A673 (cell line): ENCODE measurements at regions of chr6 and their contacts with region 1.

Region 1: GRCh38 chr6:28838634-28839442 is 84.9 kb downstream of the TRIM27 start:
- DNase-seq: peak; percentile 93
- H3K4me3 ChIP-seq: peak overlapping the region; percentile 83
- H3K27ac ChIP-seq: peak overlapping the region; percentile 79
- H3K4me1 ChIP-seq: no peaks in the 10 kb centered on the region
- H3K27me3 ChIP-seq: no peaks in the 10 kb centered on the region
- CTCF ChIP-seq: peak; percentile 84

Region 2: DNA sequence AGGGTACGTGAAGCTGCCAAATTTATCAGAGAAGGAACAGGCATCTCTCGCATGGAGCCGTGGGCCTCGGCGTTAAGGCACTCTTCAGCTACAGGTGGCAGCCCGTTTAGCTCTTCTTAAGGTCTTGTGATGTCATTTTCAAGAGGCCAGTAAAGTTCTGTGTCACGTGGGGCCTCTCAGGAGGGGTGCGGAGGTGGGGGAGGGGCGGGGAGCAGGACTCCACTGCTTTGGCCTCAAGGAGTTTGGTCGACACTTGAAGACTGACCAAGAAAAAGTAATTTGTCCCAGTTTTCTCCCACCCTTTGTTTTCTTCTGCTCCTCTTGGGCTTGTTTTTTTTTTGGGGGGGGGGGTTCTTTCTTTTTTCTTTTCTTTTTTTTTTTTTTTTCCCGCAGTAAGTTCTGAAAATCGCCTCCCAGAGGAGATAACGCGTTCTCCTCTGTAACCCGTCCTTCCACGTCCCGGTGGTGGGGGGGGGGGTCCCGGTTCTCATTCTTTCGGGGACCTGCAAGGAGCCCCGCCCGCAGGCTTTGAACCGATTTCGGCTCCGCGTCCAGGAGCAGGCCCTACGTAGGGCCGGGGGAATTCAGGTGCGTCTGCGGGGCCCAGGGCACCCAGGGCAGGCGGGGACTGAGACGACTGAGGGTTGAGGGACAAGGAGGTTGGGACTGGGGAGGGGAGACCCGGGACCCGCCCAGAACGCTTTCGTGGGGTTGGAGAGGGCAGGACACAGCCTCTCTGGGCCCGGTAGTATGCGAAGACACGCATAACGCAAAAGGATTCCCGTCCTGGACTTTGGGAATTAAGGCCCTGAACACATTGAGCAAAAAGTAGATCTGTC is 349.3 kb before region 1 on chr6:
- CTCF ChIA-PET with region 1: no interaction called
- POLR2A ChIA-PET with region 1: no interaction called
- intact Hi-C with region 1: loop called (anchors 2 kb)
- DNase-seq: peak; percentile 90
- H3K4me3 ChIP-seq: peak overlapping the region; percentile 62
- H3K27ac ChIP-seq: peak overlapping the region; percentile 79
- H3K4me1 ChIP-seq: no peaks in the 10 kb centered on the region
- H3K27me3 ChIP-seq: no peaks in the 10 kb centered on the region
- CTCF ChIP-seq: no peak

Region 3: DNA sequence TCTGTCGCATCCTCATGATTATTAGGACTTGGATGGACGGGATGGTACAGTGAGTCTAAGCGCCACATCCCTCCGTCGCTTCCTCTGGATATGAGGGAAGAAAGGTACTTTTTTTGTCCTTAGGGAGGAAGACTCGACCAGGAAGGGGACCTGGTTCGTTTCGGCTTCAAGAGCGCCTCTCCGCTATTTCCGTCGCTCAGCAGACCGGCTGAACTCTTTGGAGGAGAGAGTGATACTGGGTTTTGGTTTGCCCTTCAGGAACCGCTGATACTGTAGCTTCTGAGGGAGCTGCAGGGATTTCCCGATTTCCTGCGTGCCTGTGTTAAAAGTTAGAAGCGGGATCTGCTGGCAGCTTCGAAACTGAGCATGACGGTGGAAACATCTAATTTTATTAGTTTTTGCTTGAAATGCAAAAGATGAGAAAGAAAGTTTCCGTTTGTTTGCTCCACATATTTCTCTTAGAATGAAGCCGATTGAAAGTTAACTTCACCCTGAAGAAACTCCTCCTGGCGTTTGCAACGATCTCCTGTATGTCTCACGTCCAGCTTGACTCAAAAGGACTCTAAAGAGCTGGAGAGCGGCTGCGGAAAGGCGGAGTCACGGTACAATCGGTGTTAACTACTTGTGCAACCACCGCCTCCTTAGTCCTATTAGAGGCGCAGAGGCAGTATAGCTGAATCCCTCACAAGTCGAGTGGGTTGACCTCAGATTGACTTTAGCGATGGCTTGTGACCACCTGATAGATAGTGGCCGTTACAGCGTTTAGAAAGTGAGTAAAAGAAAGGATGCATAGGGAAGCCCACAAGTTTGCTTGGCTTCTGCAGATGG is 44.4 kb before region 1 on chr6:
- CTCF ChIA-PET with region 1: interaction called, 4 read pairs
- POLR2A ChIA-PET with region 1: interaction called, 11 read pairs
- intact Hi-C with region 1: no loop called
- DNase-seq: peak; percentile 75
- H3K4me3 ChIP-seq: peak overlapping the region; percentile 51
- H3K27ac ChIP-seq: no peak overlapping the region
- H3K4me1 ChIP-seq: peaks cover 6% of the 10 kb centered on the region
- H3K27me3 ChIP-seq: no peaks in the 10 kb centered on the region
- CTCF ChIP-seq: no peak

Region 4: GRCh38 chr6:28863604-28864320 is 24.9 kb after region 1 on chr6:
- CTCF ChIA-PET with region 1: interaction called, 4 read pairs
- POLR2A ChIA-PET with region 1: no interaction called
- intact Hi-C with region 1: loop called (anchors 2 kb)
- DNase-seq: peak; percentile 90
- H3K4me3 ChIP-seq: peak overlapping the region; percentile 69
- H3K27ac ChIP-seq: peak overlapping the region; percentile 73
- H3K4me1 ChIP-seq: peaks cover 15% of the 10 kb centered on the region
- H3K27me3 ChIP-seq: no peaks in the 10 kb centered on the region
- CTCF ChIP-seq: no peak

Region 5: DNA sequence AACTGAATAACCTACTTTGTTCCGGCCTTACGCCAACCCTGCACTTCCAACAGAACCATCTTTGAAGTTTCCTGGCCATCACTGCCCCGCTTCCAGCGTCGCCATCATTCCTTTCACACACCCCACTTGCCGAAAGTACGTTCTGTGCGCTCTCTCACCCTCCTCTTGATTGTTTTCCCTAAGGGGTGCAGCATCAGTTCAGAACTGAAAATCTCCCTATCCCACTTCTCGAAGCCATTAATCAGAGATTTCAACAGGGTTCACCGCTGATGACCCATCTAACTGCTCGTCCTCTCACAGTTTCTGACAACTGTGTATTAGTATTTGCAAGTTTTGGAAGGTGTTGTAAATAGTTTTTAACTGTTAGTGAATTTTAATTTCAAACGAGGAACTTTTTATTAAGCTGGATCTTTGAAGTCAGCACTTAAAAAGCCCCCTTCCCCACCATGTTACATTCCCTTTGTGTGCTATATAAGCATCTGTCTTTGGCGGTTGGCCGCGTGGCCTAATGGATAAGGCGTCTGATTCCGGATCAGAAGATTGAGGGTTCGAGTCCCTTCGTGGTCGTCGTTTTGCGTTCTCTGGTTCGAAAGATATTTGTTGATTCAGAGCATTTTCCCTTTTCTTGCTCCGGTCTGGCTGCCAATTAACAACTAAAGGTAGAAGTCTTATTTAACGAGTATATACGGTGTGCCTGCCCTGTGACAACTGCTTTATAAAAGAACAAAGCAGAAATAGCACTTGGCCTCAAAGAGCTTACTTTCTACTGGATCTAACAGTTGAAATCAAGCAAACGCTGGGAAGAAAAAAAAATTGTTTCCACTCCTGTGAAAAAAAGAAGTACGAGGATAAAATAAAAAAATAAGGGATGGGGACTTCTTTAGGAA is 42.3 kb after region 1 on chr6:
- CTCF ChIA-PET with region 1: no interaction called
- POLR2A ChIA-PET with region 1: no interaction called
- intact Hi-C with region 1: loop called (anchors 5 kb)
- DNase-seq: peak; percentile 88
- H3K4me3 ChIP-seq: peak overlapping the region; percentile 66
- H3K27ac ChIP-seq: peak overlapping the region; percentile 70
- H3K4me1 ChIP-seq: no peaks in the 10 kb centered on the region
- H3K27me3 ChIP-seq: no peaks in the 10 kb centered on the region
- CTCF ChIP-seq: no peak

Region 6: DNA sequence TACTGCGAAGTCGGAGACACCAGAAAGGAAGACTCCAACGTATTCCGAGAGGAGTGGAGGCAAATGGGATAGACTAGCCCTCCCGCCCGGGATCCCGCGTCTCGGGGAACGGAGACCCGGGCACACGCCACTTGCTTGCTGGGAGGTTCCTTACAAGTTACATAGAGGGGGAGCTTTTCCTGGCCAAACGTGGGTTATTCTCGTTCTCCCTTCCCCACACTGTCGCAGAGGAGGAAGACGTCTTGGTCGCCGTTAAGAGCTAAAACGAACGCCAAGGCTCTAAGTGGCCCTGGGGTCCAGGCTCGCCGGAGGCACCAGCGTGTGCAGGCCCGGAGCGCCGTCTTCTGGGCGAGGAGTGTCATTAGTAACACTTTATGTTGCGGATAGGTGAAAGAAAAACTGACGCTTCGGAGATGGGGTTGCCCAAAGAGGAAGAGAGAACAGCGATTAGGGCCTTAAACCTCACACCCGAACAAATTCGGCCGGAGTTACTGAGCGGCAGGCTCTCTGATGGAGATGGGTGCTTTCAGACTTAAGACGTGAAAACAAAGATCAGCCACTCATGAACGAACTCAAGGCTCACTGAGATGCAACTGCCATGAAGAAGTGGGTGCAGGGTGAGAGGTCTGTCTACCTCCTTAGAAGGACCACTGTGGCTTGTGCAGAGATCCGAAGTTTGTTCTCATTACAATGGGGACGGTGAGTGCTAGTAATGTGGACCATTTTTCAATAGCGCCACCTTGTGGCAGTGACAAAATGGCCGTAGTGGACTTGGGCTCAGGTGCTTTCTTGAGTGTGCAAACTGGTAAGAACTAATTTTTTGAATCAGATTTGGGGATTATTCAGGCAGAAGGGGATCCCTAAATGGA is 178.0 kb after region 1 on chr6:
- CTCF ChIA-PET with region 1: interaction called, 9 read pairs
- POLR2A ChIA-PET with region 1: no interaction called
- intact Hi-C with region 1: loop called (anchors 2 kb)
- DNase-seq: peak; percentile 84
- H3K4me3 ChIP-seq: peak overlapping the region; percentile 54
- H3K27ac ChIP-seq: no peak overlapping the region
- H3K4me1 ChIP-seq: no peaks in the 10 kb centered on the region
- H3K27me3 ChIP-seq: no peaks in the 10 kb centered on the region
- CTCF ChIP-seq: peak; percentile 84